Colonic mucosa (tissue), 4 donors: ENCODE measurements at regions of chr12 and their contacts with region 1.

Region 1: GRCh38 chr12:14514154-14514842 is 53.4 kb downstream of the PLBD1 start:
- DNase-seq: peak; percentile 77
- H3K4me3 ChIP-seq: no peak overlapping the region
- H3K27ac ChIP-seq: peak overlapping the region; percentile 28
- H3K4me1 ChIP-seq: no peaks in the 10 kb centered on the region
- H3K27me3 ChIP-seq: no peaks in the 10 kb centered on the region
- CTCF ChIP-seq: peak; percentile 55

Region 2: GRCh38 chr12:14629832-14630710 is 115.8 kb after region 1 on chr12:
- intact Hi-C with region 1: loop called (anchors 10 kb)
- DNase-seq: peak; percentile 90
- H3K4me3 ChIP-seq: no peak overlapping the region
- H3K27ac ChIP-seq: no peak overlapping the region
- H3K4me1 ChIP-seq: no peaks in the 10 kb centered on the region
- H3K27me3 ChIP-seq: no peaks in the 10 kb centered on the region
- CTCF ChIP-seq: peak; percentile 91